Colonic mucosa (tissue), 4 donors: ENCODE measurements at regions of chr7 and their contacts with region 1.

Region 1: DNA sequence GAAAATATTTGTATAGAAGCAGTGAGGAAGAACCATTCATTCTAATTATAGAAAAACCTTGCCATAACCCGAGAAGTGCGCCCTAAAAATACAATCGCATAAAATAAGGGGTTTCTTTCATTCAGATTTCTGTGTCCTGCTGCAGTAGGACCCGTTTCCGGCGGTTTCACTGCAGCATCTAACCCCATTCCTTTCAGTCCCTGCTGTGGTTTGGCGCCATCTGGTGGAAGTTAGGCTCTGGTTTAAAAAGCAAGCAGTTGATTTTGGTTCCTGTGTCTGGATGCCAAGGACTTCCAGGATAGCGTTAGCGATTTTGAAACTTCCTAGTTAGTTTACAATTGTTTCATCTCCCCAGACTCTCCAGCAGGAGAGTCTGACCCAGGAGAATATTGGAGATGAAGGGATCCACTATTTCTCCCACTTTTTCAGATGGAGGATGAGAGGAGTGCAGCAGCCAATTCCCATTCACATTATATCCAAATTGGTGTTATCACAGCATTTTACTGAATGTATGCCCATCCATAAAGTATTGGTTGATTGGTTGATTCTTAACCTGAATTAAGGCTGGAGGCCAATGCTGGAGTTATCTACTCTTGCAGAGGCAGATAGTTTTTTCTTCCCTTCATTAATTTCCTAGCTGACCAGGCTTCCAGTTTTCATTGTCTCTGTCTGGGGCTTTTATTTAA is 128.8 kb upstream of the CACNA2D1 start:
- DNase-seq: peak; percentile 87
- H3K4me3 ChIP-seq: no peak overlapping the region
- H3K27ac ChIP-seq: no peak overlapping the region
- H3K4me1 ChIP-seq: no peaks in the 10 kb centered on the region
- H3K27me3 ChIP-seq: no peaks in the 10 kb centered on the region
- CTCF ChIP-seq: peak; percentile 86

Region 2: DNA sequence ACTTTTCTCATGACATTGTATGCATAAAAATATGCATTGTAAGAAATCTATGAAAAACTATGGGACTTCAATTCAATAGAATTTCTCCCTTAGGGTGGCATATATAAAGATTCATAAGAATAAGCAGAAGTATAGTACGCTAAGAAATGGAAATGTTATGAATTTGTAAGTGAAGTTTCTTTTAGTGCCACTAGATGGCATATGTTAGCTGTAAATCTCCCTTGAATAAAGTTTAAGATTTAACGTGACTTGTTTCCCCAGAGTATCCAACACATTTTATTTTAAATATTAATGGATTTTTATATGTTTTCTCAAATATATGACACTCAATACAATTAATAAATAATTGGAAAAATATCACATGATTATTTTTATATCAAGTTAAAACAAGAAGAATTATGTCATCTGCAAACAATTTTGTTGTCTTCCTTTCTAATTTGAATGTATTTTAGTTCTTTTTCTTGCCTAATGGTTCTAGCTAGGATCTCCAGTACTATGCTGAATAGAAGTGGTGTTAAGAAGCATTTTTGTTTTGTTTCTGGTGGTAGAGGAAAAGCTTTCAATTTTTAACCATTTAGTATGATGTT is 1089.6 kb before region 1 on chr7:
- intact Hi-C with region 1: loop called (anchors 10 kb)
- DNase-seq: no peak
- H3K4me3 ChIP-seq: no peak overlapping the region
- H3K27ac ChIP-seq: no peak overlapping the region
- H3K4me1 ChIP-seq: no peaks in the 10 kb centered on the region
- H3K27me3 ChIP-seq: no peaks in the 10 kb centered on the region
- CTCF ChIP-seq: peak; percentile 64

Region 3: DNA sequence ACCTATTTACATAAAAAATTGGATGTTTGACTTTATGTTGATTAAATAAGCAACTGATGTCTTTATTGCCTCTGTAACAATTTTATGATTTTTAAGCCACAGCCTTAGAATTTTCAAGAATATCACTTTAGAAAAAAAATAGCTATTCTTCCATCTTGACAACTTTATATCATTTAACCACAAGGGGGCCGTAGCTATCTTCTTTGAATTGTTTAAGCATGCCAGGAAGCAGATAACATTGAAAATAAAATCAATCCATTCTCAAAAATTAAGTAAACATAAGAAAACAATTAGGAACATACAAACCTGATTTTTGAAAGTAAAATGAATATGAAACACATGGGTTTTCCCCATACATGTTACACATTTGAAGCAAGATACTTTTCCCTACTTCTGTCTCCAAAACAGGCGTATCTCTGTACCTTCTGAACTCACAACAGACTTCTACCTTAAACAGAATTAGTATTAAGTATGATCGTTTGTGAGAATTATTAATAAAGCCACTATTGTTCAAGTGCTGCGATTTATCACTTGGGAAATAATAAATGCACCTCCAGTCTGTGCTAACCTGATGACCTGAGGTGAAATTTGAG is 337.8 kb before region 1 on chr7:
- intact Hi-C with region 1: loop called (anchors 10 kb)
- DNase-seq: no peak
- H3K4me3 ChIP-seq: no peak overlapping the region
- H3K27ac ChIP-seq: no peak overlapping the region
- H3K4me1 ChIP-seq: no peaks in the 10 kb centered on the region
- H3K27me3 ChIP-seq: no peaks in the 10 kb centered on the region
- CTCF ChIP-seq: peak; percentile 31

Region 4: GRCh38 chr7:82335927-82336326 is 236.4 kb before region 1 on chr7:
- intact Hi-C with region 1: no loop called
- DNase-seq: no peak
- H3K4me3 ChIP-seq: no peak overlapping the region
- H3K27ac ChIP-seq: no peak overlapping the region
- H3K4me1 ChIP-seq: no peaks in the 10 kb centered on the region
- H3K27me3 ChIP-seq: no peaks in the 10 kb centered on the region
- CTCF ChIP-seq: no peak

Region 5: GRCh38 chr7:82464372-82464771 is 108.0 kb before region 1 on chr7:
- intact Hi-C with region 1: no loop called
- DNase-seq: no peak
- H3K4me3 ChIP-seq: no peak overlapping the region
- H3K27ac ChIP-seq: no peak overlapping the region
- H3K4me1 ChIP-seq: no peaks in the 10 kb centered on the region
- H3K27me3 ChIP-seq: no peaks in the 10 kb centered on the region
- CTCF ChIP-seq: no peak